ENCODE measurements at regions of chr3 and their contacts with region 1.

Region 1: DNA sequence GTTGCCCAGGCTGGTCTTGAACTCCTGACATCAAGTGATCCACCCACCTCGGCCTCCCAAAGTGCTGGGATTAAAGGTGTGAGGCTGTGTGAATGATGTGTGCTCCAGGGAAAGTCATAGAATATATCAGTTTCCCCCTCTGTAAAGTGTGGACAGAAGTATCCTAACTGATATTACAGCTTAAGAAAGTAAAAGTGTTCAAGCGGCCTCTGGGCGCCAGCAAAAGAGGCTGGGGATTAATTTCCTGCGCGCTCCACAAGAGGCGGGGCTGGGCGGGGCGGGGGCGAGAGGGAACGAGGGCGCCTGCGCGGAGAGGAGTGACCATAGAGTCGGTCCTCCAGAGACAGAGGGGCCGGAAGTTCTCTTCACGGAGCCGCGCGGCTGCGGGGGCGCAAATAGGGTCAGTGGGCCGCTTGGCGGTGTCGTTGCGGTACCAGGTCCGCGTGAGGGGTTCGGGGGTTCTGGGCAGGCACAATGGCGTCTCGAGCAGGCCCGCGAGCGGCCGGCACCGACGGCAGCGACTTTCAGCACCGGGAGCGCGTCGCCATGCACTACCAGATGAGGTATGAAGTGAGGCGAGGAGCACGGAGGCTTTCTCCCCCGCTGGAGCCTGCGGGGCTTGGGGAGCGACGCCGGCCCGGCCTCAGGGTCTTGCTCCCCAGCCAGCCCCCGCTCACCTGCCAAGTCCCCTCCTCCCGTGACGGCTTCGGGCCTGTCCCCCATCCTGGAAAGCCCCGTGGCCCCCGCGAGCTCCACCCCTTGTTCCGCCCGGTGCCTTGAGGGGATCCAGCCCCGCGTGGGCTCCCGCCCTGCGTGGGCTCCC is at the start of gene JAGN1:
- DNase-seq: peak; percentile 84 to 96 (median 91)
- ATAC-seq: peak; percentile 91
- H3K4me3 ChIP-seq: peak within 1 kb of the TSS; percentile 95
- H3K4me3 Mint-ChIP-seq: peak within 1 kb of the TSS; percentile 99
- H3K27ac ChIP-seq: peak within 1 kb of the TSS; percentile 99 to 100
- H3K27ac Mint-ChIP-seq: peak within 1 kb of the TSS; percentile 95
- H3K4me1 ChIP-seq: peaks cover 20% of the 10 kb centered on the region
- H3K4me1 Mint-ChIP-seq: peaks cover 49% of the 10 kb centered on the region
- H3K27me3 ChIP-seq: no peaks in the 10 kb centered on the region
- H3K27me3 Mint-ChIP-seq: no peaks in the 10 kb centered on the region
- CTCF ChIP-seq: no peak
- total RNA-seq, gene JAGN1: 14.4 to 15.1 TPM

Region 2: DNA sequence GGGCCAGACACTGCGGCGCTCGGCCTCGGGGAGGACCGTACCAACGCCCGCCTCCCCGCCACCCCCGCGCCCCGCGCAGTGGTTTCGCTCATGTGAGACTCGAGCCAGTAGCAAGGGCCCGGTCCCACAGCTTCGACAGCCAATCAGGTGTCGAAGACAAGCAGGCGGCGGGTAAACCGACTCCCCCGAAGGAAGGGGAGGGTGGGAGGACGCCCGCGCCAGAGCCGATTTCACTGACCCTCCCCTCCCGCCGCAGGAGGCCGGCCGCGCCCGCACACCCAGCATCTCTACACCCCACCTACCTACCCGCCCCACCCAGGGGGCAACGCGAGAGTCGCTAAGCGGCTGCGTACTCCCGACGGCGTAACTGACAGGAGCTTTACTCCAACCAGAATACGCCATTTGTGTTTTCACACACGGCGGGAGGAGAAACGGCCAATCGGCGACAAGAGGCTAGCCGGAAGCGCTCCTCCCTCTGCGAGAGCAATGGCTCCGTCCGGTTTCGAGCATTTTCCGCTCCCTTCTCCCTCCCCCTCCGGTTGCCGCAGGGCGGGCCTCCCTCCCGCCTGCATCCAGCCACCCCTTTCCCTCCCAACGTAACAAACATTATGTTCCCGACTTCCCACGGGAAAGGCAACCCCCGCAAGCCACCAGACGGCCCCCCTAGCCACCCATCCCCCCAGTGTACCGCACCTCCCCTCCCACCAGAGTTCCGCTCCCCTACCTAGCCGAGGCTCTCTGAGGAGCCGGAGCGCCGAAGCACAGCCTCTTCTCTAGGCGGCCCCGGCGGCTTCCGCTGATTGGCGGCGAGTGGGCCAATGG is 493.5 kb before region 1 on chr3:
- CTCF ChIA-PET with region 1: no interaction called
- POLR2A ChIA-PET with region 1: interaction called, 16 read pairs
- intact Hi-C with region 1: no loop called
- DNase-seq: peak; percentile 98 to 100 (median 99)
- ATAC-seq: peak; percentile 65
- H3K4me3 ChIP-seq: peak overlapping the region; percentile 74
- H3K4me3 Mint-ChIP-seq: peak overlapping the region; percentile 95
- H3K27ac ChIP-seq: peak overlapping the region; percentile 87 to 95
- H3K27ac Mint-ChIP-seq: peak overlapping the region; percentile 99
- H3K4me1 ChIP-seq: peaks cover 30% of the 10 kb centered on the region
- H3K4me1 Mint-ChIP-seq: peaks cover 78% of the 10 kb centered on the region
- H3K27me3 ChIP-seq: no peaks in the 10 kb centered on the region
- H3K27me3 Mint-ChIP-seq: no peaks in the 10 kb centered on the region
- CTCF ChIP-seq: no peak

Region 3: DNA sequence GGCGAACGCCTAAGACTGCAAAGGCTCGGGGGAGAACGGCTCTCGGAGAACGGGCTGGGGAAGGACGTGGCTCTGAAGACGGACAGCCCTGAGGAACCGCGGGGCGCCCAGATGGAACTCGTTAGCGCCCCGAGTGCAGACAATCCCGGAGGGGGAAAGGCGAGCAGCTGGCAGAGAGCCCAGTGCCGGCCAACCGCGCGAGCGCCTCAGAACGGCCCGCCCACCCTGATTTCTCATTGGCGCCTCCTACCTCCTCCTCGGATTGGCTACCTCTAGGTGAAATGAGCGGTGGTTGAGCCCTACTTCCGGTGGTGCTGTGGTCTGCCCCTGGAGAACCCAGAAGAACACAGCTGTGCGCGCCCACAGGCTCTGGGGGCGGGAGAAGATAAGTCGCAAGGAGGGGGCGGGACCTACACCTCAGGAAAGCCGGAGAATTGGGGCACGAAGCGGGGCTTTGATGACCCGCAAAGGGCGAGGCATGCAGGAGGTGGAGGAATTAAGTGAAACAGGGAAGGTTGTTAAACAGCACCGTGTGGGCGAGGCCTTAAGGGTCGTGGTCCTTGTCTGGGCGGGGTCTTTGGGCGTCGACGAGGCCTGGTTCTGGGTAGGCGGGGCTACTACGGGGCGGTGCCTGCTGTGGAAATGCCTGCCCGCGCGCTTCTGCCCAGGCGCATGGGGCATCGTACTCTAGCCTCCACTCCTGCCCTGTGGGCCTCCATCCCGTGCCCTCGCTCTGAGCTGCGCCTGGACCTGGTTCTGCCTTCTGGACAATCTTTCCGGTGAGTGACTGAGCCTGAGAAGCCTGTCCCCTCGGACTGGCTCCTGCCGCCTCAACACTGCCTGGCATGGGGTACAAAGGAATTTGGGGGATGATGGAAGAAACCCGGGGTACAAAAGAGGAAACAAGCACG is 140.6 kb before region 1 on chr3 and contains the start of gene OGG1:
- CTCF ChIA-PET with region 1: no interaction called
- POLR2A ChIA-PET with region 1: no interaction called
- intact Hi-C with region 1: loop called in 1 of 2 experiments (anchors 5 kb)
- DNase-seq: peak; percentile 84 to 98 (median 91)
- ATAC-seq: peak; percentile 94
- H3K4me3 ChIP-seq: peak within 1 kb of the TSS; percentile 82
- H3K4me3 Mint-ChIP-seq: peak within 1 kb of the TSS; percentile 95
- H3K27ac ChIP-seq: peak within 1 kb of the TSS; percentile 69 to 74
- H3K27ac Mint-ChIP-seq: peak within 1 kb of the TSS; percentile 85
- H3K4me1 ChIP-seq: peaks cover 37% of the 10 kb centered on the region
- H3K4me1 Mint-ChIP-seq: peaks cover 48% of the 10 kb centered on the region
- H3K27me3 ChIP-seq: no peaks in the 10 kb centered on the region
- H3K27me3 Mint-ChIP-seq: no peaks in the 10 kb centered on the region
- CTCF ChIP-seq: no peak
- total RNA-seq, gene OGG1: 7.1 to 8.9 TPM

Region 4: DNA sequence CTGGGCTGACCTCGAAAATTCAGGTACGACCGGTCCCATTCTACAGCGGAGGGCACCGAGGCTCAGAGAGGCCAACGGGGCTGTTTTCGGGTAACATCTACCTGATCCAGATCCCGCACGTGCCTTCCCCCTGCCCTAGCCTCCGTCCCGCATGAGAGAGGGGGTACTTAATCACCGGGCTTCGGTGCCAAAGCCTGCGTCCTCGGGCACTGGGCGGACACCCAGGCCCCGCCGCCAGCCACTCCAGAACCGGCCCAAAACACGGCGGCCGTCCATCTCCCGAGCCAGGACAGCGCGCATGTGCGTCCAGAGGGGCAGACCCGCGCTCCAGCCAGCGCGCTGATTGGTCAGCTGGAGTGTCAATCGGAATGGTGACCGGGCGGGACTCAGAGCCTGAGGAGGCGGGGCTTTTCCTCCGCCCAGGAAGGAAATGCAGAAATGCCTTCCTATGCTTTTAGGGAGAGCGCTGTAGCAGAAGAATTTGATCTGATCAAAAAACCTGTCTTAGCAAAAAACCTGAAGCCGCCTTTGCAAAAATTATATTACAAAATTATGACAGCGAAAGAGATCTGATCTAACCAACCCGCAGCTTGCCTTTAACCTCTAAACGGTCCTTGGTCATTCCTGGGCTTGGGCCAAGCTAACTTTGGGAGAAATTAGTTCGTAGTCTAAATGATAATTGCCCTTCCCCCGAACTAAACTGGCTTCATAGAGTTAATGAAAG is 46.6 kb before region 1 on chr3 and contains the start of gene RPUSD3:
- CTCF ChIA-PET with region 1: interaction called, 3 read pairs
- POLR2A ChIA-PET with region 1: interaction called, 7 read pairs
- intact Hi-C with region 1: loop called (anchors 2 kb)
- DNase-seq: peak; percentile 93 to 98 (median 96)
- ATAC-seq: peak; percentile 98
- H3K4me3 ChIP-seq: peak within 1 kb of the TSS; percentile 73
- H3K4me3 Mint-ChIP-seq: peak within 1 kb of the TSS; percentile 98
- H3K27ac ChIP-seq: peak within 1 kb of the TSS; percentile 21 to 38
- H3K27ac Mint-ChIP-seq: peak within 1 kb of the TSS; percentile 80
- H3K4me1 ChIP-seq: peaks cover 28% of the 10 kb centered on the region
- H3K4me1 Mint-ChIP-seq: peaks cover 28% of the 10 kb centered on the region
- H3K27me3 ChIP-seq: no peaks in the 10 kb centered on the region
- H3K27me3 Mint-ChIP-seq: no peaks in the 10 kb centered on the region
- CTCF ChIP-seq: no peak
- total RNA-seq, gene RPUSD3: 7.9 to 8.1 TPM

Region 5: GRCh38 chr3:9915254-9916141 is 25.0 kb after region 1 on chr3:
- CTCF ChIA-PET with region 1: no interaction called
- POLR2A ChIA-PET with region 1: interaction called, 17 read pairs
- intact Hi-C with region 1: no loop called
- DNase-seq: peak in 9 of 14 experiments; percentile 6 to 67 (median 29)
- ATAC-seq: peak; percentile 28
- H3K4me3 ChIP-seq: peak overlapping the region; percentile 51
- H3K4me3 Mint-ChIP-seq: peak overlapping the region; percentile 81
- H3K27ac ChIP-seq: no peak overlapping the region
- H3K27ac Mint-ChIP-seq: no peak overlapping the region
- H3K4me1 ChIP-seq: peaks cover 37% of the 10 kb centered on the region
- H3K4me1 Mint-ChIP-seq: peaks cover 19% of the 10 kb centered on the region
- H3K27me3 ChIP-seq: no peaks in the 10 kb centered on the region
- H3K27me3 Mint-ChIP-seq: no peaks in the 10 kb centered on the region
- CTCF ChIP-seq: no peak

Region 6: DNA sequence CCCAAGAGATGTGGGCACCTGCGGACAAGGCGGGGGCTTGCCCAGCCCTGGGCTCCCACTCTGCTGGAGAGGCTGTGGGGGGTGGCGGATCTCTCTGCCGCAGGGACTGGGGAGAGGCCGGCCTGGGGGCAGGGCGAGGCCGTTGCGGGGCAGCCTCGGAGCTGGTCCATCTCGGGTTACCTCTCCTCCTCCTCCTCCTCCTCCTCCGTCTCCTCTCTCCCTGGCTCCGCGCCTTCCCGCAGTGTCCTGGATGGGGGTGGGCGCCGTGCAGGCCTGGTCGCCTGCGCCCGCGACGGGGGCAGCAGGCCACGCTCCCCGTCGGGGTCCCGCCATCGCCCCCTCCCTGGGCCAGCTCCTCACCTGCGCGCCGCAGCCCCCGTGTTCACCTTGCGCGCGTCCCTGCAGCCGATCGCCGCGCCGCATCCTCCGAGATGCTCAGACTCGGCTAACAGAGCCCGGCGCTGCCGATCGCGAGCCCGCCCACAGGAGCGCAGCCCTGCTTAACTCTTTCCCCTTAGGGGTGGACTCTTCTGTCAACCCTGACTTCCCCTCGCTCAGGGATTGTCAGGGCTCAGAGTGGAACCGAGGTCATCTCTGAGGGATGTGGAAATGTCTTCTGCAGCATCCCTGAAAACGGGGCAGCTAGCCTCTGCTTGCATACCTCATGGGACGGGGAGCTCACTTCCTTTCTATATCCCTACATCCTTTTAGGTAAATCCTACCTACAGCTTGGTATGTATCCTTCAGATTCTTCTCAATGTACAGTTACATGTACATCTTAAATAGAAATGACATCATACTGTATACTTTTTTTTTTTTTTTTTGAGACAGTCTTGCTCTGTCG is 61.7 kb after region 1 on chr3 and contains the start of gene PRRT3:
- CTCF ChIA-PET with region 1: no interaction called
- POLR2A ChIA-PET with region 1: interaction called, 3 read pairs
- intact Hi-C with region 1: loop called in 1 of 2 experiments (anchors 5 kb)
- DNase-seq: peak; percentile 37 to 74 (median 52)
- ATAC-seq: peak; percentile 95
- H3K4me3 ChIP-seq: peak within 1 kb of the TSS; percentile 77
- H3K4me3 Mint-ChIP-seq: peak within 1 kb of the TSS; percentile 88
- H3K27ac ChIP-seq: no peak within 1 kb of the TSS
- H3K27ac Mint-ChIP-seq: peak within 1 kb of the TSS; percentile 41
- H3K4me1 ChIP-seq: peaks cover 21% of the 10 kb centered on the region
- H3K4me1 Mint-ChIP-seq: peaks cover 21% of the 10 kb centered on the region
- H3K27me3 ChIP-seq: no peaks in the 10 kb centered on the region
- H3K27me3 Mint-ChIP-seq: no peaks in the 10 kb centered on the region
- CTCF ChIP-seq: no peak
- total RNA-seq, gene PRRT3: 6.3 to 8.3 TPM

Region 7: GRCh38 chr3:10115326-10116137 is 225.1 kb after region 1 on chr3 and contains the start of gene BRK1:
- CTCF ChIA-PET with region 1: no interaction called
- POLR2A ChIA-PET with region 1: interaction called, 5 read pairs
- intact Hi-C with region 1: loop called in 1 of 2 experiments (anchors 1 kb)
- DNase-seq: peak; percentile 83 to 98 (median 92)
- ATAC-seq: peak; percentile 97
- H3K4me3 ChIP-seq: peak within 1 kb of the TSS; percentile 98
- H3K4me3 Mint-ChIP-seq: peak within 1 kb of the TSS; percentile 95
- H3K27ac ChIP-seq: peak within 1 kb of the TSS; percentile 64 to 74
- H3K27ac Mint-ChIP-seq: peak within 1 kb of the TSS; percentile 88
- H3K4me1 ChIP-seq: peaks cover 41% of the 10 kb centered on the region
- H3K4me1 Mint-ChIP-seq: peaks cover 36% of the 10 kb centered on the region
- H3K27me3 ChIP-seq: no peaks in the 10 kb centered on the region
- H3K27me3 Mint-ChIP-seq: no peaks in the 10 kb centered on the region
- CTCF ChIP-seq: no peak
- total RNA-seq, gene BRK1: 33.1 to 33.8 TPM